ENCODE measurements at regions of chr9 and their contacts with region 1.

Region 1: GRCh38 chr9:133532937-133533668 is 1.4 kb upstream of the ADAMTSL2 start:
- DNase-seq: peak; percentile 49
- ATAC-seq: peak; percentile 86
- H3K4me3 Mint-ChIP-seq: no peak overlapping the region
- H3K27ac Mint-ChIP-seq: no peak overlapping the region
- H3K4me1 Mint-ChIP-seq: peaks cover 11% of the 10 kb centered on the region
- H3K27me3 Mint-ChIP-seq: peaks cover 31% of the 10 kb centered on the region
- CTCF ChIP-seq: no peak

Region 2: GRCh38 chr9:133715866-133716563 is 182.9 kb after region 1 on chr9:
- CTCF ChIA-PET with region 1: no interaction called
- POLR2A ChIA-PET with region 1: no interaction called
- intact Hi-C with region 1: no loop called
- DNase-seq: no peak
- ATAC-seq: no peak
- H3K4me3 Mint-ChIP-seq: no peak overlapping the region
- H3K27ac Mint-ChIP-seq: no peak overlapping the region
- H3K4me1 Mint-ChIP-seq: peaks cover 7% of the 10 kb centered on the region
- H3K27me3 Mint-ChIP-seq: peaks cover 37% of the 10 kb centered on the region
- CTCF ChIP-seq: no peak

Region 3: DNA sequence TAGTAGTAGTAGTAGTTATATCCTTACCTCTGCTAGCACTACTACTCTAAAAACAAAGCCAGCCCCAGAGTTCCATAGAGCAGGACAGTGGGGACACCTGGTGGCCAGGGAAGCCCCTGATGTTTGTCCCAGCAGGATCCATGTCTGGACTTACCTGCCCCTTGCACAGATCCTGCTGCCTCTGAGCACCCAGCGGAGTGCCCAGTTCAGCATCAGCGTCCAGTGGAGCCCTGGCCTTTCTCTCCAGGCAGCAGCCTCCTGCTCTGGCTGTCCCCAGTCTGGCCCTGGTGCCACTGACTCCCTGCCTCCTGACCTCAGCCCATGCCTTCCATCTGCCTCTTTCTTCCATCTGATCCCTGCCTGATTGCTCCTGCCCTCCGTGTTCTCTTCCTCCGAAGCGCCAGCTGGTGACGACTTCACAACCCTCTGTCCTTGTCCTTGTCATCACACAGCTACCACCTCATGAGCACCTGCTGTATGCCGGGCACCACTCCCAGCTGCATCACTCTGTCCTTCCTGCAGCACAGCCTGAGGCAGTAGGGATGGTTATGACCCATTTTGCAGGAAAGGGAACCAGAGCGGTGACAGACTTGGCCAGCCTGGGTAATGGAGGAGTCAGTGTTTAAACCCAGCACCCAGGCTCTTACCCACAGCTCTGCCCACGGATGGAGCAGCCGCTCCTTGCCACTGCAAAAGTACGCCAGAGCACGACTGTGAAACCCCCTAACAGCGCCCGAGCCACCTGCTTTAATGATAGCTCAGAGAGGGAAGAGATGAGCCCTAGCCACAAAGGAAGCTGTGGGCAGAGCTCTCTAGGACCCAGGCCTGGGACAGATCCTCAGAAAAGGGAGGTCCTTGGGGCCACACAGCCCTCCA is 193.5 kb after region 1 on chr9:
- CTCF ChIA-PET with region 1: interaction called, 8 read pairs
- POLR2A ChIA-PET with region 1: no interaction called
- intact Hi-C with region 1: loop called (anchors 1 kb)
- DNase-seq: peak; percentile 13
- ATAC-seq: peak; percentile 28
- H3K4me3 Mint-ChIP-seq: no peak overlapping the region
- H3K27ac Mint-ChIP-seq: no peak overlapping the region
- H3K4me1 Mint-ChIP-seq: peaks cover 4% of the 10 kb centered on the region
- H3K27me3 Mint-ChIP-seq: peaks cover 22% of the 10 kb centered on the region
- CTCF ChIP-seq: no peak